GM13977 (cell line): ENCODE measurements at regions of chr1 and their contacts with region 1.

Region 1: DNA sequence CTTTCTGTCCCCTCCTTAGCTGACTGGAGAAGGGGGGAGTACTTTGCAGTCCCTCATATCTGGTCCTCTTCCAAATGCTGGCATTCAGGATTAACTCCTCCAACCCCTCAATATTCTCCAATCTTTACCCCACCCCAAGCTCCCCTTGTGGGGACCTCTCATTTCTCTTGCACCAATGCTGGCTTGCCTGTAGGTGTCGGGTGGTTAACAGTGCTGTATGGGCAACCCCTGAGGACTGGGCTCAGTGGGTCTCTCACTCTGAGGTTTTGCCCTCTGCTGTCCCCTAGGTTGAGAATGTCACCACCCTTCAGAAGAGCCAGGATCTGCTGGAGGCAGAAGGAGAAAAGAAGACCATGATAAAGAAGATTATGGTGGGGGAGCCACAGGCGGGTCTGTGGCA is 27.0 kb downstream of the MROH7 start:
- DNase-seq: no peak
- CTCF ChIP-seq: no peak

Region 2: GRCh38 chr1:54810100-54810942 is 141.8 kb after region 1 on chr1:
- in situ Hi-C with region 1: loop called (anchors 10 kb)
- DNase-seq: peak; percentile 88
- CTCF ChIP-seq: peak; percentile 97

Region 3: DNA sequence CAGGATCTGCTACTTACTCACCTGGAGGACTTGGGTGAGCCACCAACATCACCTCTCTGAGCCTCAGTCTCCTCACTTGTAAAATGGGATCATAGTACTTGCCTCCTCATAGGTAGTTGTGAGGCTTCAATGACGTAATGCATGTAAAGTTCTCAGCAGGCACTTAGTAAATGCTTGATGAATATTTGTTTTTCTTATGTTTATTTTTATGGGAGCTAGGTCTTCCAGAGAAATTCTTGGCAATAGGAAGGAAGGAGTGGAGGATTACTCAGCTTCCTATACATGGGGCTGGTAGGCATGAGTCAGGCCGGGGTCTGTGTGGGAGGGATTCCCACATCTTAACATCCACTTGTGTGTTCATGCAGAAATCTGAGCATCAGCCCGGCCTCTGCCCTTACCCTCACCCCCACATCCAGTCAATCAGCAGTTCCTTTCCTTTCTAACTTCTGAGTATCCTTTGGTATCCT is 642.0 kb after region 1 on chr1:
- in situ Hi-C with region 1: no loop called
- DNase-seq: no peak
- CTCF ChIP-seq: no peak